Esophagus muscularis mucosa (tissue), 4 donors: ENCODE measurements at regions of chr1 and their contacts with region 1.

Region 1: DNA sequence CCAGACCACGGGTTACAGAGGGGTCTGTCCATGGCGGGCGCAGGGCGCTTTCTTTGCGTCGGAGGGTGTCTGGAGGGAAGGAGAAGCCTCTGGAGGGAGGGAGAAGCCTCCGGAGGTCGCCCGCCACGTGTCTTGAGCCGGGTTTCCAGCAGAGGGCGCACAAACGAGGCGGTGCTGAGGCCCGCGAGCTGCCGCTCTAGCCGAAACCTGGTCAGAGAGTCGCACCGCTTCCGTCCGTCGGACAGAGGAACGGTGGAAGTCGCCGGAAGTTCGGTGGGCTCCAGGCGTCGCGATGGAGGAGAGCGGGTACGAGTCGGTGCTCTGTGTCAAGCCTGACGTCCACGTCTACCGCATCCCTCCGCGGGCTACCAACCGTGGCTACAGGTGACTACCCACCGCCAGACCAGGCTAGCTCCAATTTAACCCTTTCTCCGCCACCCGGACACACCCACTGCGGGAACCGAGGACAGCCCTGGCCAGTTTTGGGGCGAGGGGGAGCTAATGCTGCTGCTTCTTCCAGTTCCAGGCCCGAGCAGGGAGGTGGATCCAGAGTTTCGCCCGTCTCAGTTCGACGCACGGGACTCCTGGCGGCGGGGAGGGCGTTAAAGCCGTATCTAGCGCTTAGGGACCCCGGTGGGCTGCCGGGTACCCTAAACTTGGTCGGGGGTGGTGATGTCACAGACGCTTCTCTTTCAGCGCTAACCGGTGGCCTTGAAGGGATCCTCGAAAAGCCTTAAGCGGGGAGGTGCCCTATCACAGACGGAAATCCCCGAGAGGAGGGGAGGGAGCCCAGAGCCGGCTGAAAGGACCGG is at the start of gene NECAP2:
- DNase-seq: peak; percentile 95
- H3K4me3 ChIP-seq: peak within 1 kb of the TSS; percentile 70 to 85 (median 75)
- H3K27ac ChIP-seq: peak within 1 kb of the TSS; percentile 69 to 77 (median 76)
- H3K4me1 ChIP-seq: peaks cover 34 to 43% (median 39%) of the 10 kb centered on the region in 4 donors
- H3K27me3 ChIP-seq: no peaks in the 10 kb centered on the region
- CTCF ChIP-seq: peak; percentile 88 to 92 (median 91)
- EP300 ChIP-seq: no peak
- POLR2A ChIP-seq: no peak
- total RNA-seq, gene NECAP2: 26.2 to 43.9 (median 37.5) TPM

Region 2: GRCh38 chr1:16498573-16499413 is 58.1 kb after region 1 on chr1:
- intact Hi-C with region 1: loop called (anchors 2 kb)
- DNase-seq: peak; percentile 95
- H3K4me3 ChIP-seq: peak overlapping the region; percentile 74 to 90 (median 83)
- H3K27ac ChIP-seq: peak overlapping the region; percentile 80 to 91 (median 82)
- H3K4me1 ChIP-seq: peaks cover 7 to 30% (median 26%) of the 10 kb centered on the region in 4 donors
- H3K27me3 ChIP-seq: no peaks in the 10 kb centered on the region
- CTCF ChIP-seq: peak in 1 of 3 experiments; percentile 22
- EP300 ChIP-seq: no peak
- POLR2A ChIP-seq: no peak